Caco-2 (cell line): ENCODE measurements at regions of chr5 and their contacts with region 1.

Region 1: GRCh38 chr5:104793031-104793754 is 1230.6 kb upstream of the NUDT12 start:
- DNase-seq: peak in 1 of 2 experiments; percentile 12
- H3K4me3 ChIP-seq: no peak overlapping the region
- H3K4me3 Mint-ChIP-seq: peak overlapping the region; percentile 14
- H3K27ac Mint-ChIP-seq: peak overlapping the region; percentile 84
- H3K4me1 ChIP-seq: peaks cover 33% of the 10 kb centered on the region
- H3K4me1 Mint-ChIP-seq: peaks cover 20% of the 10 kb centered on the region
- H3K27me3 ChIP-seq: no peaks in the 10 kb centered on the region
- H3K27me3 Mint-ChIP-seq: no peaks in the 10 kb centered on the region
- CTCF ChIP-seq: no peak

Region 2: GRCh38 chr5:104513121-104513602 is 280.0 kb before region 1 on chr5:
- CTCF ChIA-PET with region 1: no interaction called
- POLR2A ChIA-PET with region 1: no interaction called
- intact Hi-C with region 1: loop called (anchors 1 kb)
- DNase-seq: peak; percentile 27 to 40
- H3K4me3 ChIP-seq: no peak overlapping the region
- H3K4me3 Mint-ChIP-seq: no peak overlapping the region
- H3K27ac Mint-ChIP-seq: peak overlapping the region; percentile 79
- H3K4me1 ChIP-seq: peaks cover 28% of the 10 kb centered on the region
- H3K4me1 Mint-ChIP-seq: peaks cover 11% of the 10 kb centered on the region
- H3K27me3 ChIP-seq: no peaks in the 10 kb centered on the region
- H3K27me3 Mint-ChIP-seq: no peaks in the 10 kb centered on the region
- CTCF ChIP-seq: no peak

Region 3: DNA sequence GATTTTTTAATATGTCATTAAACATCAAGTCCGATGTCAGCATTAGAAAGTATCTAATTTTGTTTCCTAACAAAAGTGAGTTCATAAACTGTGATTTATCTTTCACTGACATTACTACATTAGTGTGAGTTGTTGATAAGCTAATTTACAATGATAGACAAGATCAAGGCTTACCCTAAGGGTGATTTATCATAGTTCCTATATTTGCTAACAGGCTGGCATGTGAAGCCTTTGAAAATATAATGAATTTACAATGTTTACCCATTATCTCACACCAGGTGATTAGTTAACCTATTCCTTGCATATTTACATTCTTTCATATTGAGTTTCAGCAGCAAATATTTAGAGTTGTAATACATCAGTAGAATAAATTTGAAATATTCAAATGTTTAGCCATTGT is 133.7 kb before region 1 on chr5:
- CTCF ChIA-PET with region 1: no interaction called
- POLR2A ChIA-PET with region 1: no interaction called
- intact Hi-C with region 1: loop called (anchors 1 kb)
- DNase-seq: peak in 1 of 2 experiments; percentile 7
- H3K4me3 ChIP-seq: no peak overlapping the region
- H3K4me3 Mint-ChIP-seq: no peak overlapping the region
- H3K27ac Mint-ChIP-seq: no peak overlapping the region
- H3K4me1 ChIP-seq: no peaks in the 10 kb centered on the region
- H3K4me1 Mint-ChIP-seq: no peaks in the 10 kb centered on the region
- H3K27me3 ChIP-seq: no peaks in the 10 kb centered on the region
- H3K27me3 Mint-ChIP-seq: no peaks in the 10 kb centered on the region
- CTCF ChIP-seq: no peak

Region 4: GRCh38 chr5:104739905-104740304 is 53.3 kb before region 1 on chr5:
- CTCF ChIA-PET with region 1: no interaction called
- POLR2A ChIA-PET with region 1: no interaction called
- intact Hi-C with region 1: loop called (anchors 1 kb)
- DNase-seq: peak in 1 of 2 experiments; percentile 7
- H3K4me3 ChIP-seq: no peak overlapping the region
- H3K4me3 Mint-ChIP-seq: no peak overlapping the region
- H3K27ac Mint-ChIP-seq: no peak overlapping the region
- H3K4me1 ChIP-seq: peaks cover 14% of the 10 kb centered on the region
- H3K4me1 Mint-ChIP-seq: peaks cover 7% of the 10 kb centered on the region
- H3K27me3 ChIP-seq: no peaks in the 10 kb centered on the region
- H3K27me3 Mint-ChIP-seq: no peaks in the 10 kb centered on the region
- CTCF ChIP-seq: no peak

Region 5: GRCh38 chr5:104932431-104932830 is 139.2 kb after region 1 on chr5:
- CTCF ChIA-PET with region 1: no interaction called
- POLR2A ChIA-PET with region 1: no interaction called
- intact Hi-C with region 1: no loop called
- DNase-seq: no peak
- H3K4me3 ChIP-seq: no peak overlapping the region
- H3K4me3 Mint-ChIP-seq: no peak overlapping the region
- H3K27ac Mint-ChIP-seq: no peak overlapping the region
- H3K4me1 ChIP-seq: no peaks in the 10 kb centered on the region
- H3K4me1 Mint-ChIP-seq: no peaks in the 10 kb centered on the region
- H3K27me3 ChIP-seq: no peaks in the 10 kb centered on the region
- H3K27me3 Mint-ChIP-seq: no peaks in the 10 kb centered on the region
- CTCF ChIP-seq: no peak

Region 6: DNA sequence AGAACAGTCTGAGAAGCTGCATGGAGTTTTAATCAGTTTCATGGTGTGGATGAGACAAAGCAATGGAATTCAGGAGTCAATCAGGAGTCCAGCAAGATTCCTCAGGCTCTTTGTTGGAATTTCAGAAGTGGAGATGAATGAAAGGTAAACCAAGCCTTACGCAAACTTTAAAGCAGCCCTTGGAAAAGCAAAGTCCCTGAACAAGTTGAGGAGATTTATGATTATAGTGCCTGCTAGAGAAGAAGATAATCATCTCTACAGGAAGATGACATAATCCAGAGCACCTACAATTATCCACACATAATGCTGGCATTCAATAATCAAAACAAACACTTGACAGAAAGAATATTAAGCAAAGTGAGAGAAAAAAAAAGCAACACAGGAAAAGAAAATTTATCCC is 149.5 kb after region 1 on chr5:
- CTCF ChIA-PET with region 1: no interaction called
- POLR2A ChIA-PET with region 1: no interaction called
- intact Hi-C with region 1: loop called (anchors 1 kb)
- DNase-seq: peak; percentile 57 to 64
- H3K4me3 ChIP-seq: no peak overlapping the region
- H3K4me3 Mint-ChIP-seq: peak overlapping the region; percentile 13
- H3K27ac Mint-ChIP-seq: peak overlapping the region; percentile 77
- H3K4me1 ChIP-seq: peaks cover 40% of the 10 kb centered on the region
- H3K4me1 Mint-ChIP-seq: peaks cover 37% of the 10 kb centered on the region
- H3K27me3 ChIP-seq: no peaks in the 10 kb centered on the region
- H3K27me3 Mint-ChIP-seq: no peaks in the 10 kb centered on the region
- CTCF ChIP-seq: no peak

Region 7: GRCh38 chr5:105259581-105260217 is 466.5 kb after region 1 on chr5:
- CTCF ChIA-PET with region 1: no interaction called
- POLR2A ChIA-PET with region 1: no interaction called
- intact Hi-C with region 1: loop called (anchors 10 kb)
- DNase-seq: peak; percentile 3 to 34
- H3K4me3 ChIP-seq: no peak overlapping the region
- H3K4me3 Mint-ChIP-seq: peak overlapping the region; percentile 1
- H3K27ac Mint-ChIP-seq: no peak overlapping the region
- H3K4me1 ChIP-seq: peaks cover 15% of the 10 kb centered on the region
- H3K4me1 Mint-ChIP-seq: peaks cover 21% of the 10 kb centered on the region
- H3K27me3 ChIP-seq: no peaks in the 10 kb centered on the region
- H3K27me3 Mint-ChIP-seq: no peaks in the 10 kb centered on the region
- CTCF ChIP-seq: no peak